ENCODE measurements at regions of chr12 and their contacts with region 1.

Region 1: GRCh38 chr12:15882118-15882971 is at the start of gene STRAP:
- DNase-seq: peak; percentile 87 to 98 (median 96)
- ATAC-seq: peak; percentile 93 to 96
- H3K4me3 Mint-ChIP-seq: peak within 1 kb of the TSS; percentile 95 to 100 (median 98)
- H3K27ac Mint-ChIP-seq: peak within 1 kb of the TSS; percentile 95 to 100 (median 100)
- H3K4me1 Mint-ChIP-seq: peaks cover 32 to 58% (median 56%) of the 10 kb centered on the region in 4 donors
- H3K27me3 Mint-ChIP-seq: no peaks in the 10 kb centered on the region
- polyA plus RNA-seq, gene STRAP: 99.2 to 126 (median 112) TPM

Region 2: DNA sequence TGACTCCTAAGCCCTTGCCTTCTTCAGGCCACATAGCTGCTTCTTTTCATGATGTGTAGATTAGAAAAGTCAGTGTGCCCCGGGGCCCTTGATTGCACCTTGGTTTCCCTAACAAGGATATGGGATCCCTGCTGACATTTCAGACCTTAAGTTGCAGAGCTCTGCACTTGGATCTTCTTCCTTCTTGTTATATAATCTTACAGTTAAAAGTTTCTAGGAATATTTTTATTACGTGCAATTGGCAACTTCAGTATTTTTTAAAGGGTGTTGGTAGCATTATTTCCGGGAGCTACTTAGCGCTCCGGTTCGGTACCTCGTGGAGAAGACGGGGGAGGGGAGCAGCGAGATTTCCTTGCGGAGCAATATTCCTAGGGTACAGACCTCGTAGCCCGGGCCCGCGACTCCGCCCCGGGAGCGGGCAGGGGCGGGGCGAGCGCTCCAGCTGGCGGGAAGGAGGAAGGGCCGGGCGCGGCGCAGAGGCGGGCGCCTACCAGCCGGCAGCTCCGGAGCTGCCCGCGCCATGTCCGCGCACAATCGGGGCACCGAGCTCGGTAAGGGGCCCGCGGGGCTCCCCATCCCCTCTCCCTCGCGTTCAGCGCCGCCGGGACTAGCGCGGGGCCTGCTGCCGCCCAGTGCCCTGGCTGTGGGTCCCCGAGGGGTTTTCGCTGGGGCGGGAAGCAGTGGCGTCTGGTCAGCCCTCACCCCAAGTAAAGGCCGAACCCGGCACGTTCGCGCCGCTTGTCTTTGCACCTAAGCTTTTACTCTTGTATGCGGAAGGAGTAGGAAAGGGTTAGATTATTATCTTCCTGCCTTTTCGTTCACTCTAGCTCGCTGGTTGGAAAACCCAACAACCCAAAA is 28.7 kb after region 1 on chr12 and contains the start of gene DERA:
- POLR2A ChIA-PET with region 1: interaction called, 10 read pairs
- DNase-seq: peak; percentile 23 to 69 (median 54)
- ATAC-seq: peak; percentile 87 to 94
- H3K4me3 Mint-ChIP-seq: peak within 1 kb of the TSS; percentile 87 to 97 (median 94)
- H3K27ac Mint-ChIP-seq: peak within 1 kb of the TSS; percentile 80 to 95 (median 91)
- H3K4me1 Mint-ChIP-seq: peaks cover 10 to 23% (median 19%) of the 10 kb centered on the region in 4 donors
- H3K27me3 Mint-ChIP-seq: no peaks in the 10 kb centered on the region
- polyA plus RNA-seq, gene DERA: 22.8 to 28.5 (median 26.7) TPM